ENCODE measurements at regions of chr4 and their contacts with region 1.

Region 1: GRCh38 chr4:159201168-159201567 is 98.3 kb downstream of the RAPGEF2 start:
- DNase-seq: no peak
- H3K4me3 ChIP-seq: no peak overlapping the region
- H3K4me3 Mint-ChIP-seq: no peak overlapping the region
- H3K27ac ChIP-seq: no peak overlapping the region
- H3K27ac Mint-ChIP-seq: no peak overlapping the region
- H3K4me1 ChIP-seq: peaks cover 9% of the 10 kb centered on the region
- H3K4me1 Mint-ChIP-seq: peaks cover 9 to 23% (median 16%) of the 10 kb centered on the region in 4 donors
- H3K27me3 ChIP-seq: no peaks in the 10 kb centered on the region
- H3K27me3 Mint-ChIP-seq: no peaks in the 10 kb centered on the region

Region 2: DNA sequence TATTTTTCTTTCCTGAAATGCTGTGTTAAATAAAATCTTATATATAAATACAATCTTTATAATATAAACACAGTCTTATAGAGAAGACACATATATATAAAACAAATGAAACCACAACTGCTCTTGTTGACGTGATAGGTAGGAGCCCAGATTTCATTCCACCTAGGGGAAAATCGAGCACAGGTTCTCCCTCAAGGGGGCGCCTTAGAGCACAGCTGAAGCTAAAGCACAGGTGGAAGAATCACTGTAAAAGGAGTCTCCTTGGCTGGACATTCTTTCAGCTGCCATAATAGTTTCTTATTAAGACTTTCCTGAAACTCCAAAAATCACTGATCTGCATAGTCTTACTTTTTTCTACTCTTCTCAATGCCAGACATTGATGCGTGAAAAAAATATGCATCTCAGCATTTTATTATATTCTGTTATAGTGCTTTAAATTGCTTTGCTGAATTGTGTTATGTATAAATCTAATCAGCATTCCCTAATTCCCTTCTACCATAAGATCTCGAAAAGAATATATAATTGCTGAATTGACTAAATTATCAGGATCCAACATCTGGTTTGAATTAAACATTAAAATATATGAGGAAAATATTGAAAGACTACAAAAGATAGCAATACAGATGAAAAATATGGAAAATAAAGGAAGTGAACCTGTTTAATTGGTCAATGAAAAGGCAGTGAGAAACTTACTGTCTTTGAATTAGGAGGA is 705.0 kb before region 1 on chr4:
- CTCF ChIA-PET with region 1: no interaction called
- POLR2A ChIA-PET with region 1: no interaction called
- intact Hi-C with region 1: loop called (anchors 5 kb)
- DNase-seq: no peak
- H3K4me3 ChIP-seq: no peak overlapping the region
- H3K4me3 Mint-ChIP-seq: no peak overlapping the region
- H3K27ac ChIP-seq: no peak overlapping the region
- H3K27ac Mint-ChIP-seq: no peak overlapping the region
- H3K4me1 ChIP-seq: no peaks in the 10 kb centered on the region
- H3K4me1 Mint-ChIP-seq: no peaks in the 10 kb centered on the region
- H3K27me3 ChIP-seq: no peaks in the 10 kb centered on the region
- H3K27me3 Mint-ChIP-seq: peaks cover 1 to 3% of the 10 kb centered on the region in 2 donors

Region 3: GRCh38 chr4:158856852-158857251 is 344.3 kb before region 1 on chr4:
- CTCF ChIA-PET with region 1: interaction called, 34 read pairs
- POLR2A ChIA-PET with region 1: no interaction called
- intact Hi-C with region 1: loop called (anchors 1 kb)
- DNase-seq: peak in 4 of 5 donors; percentile 22 to 28 (median 27)
- H3K4me3 ChIP-seq: no peak overlapping the region
- H3K4me3 Mint-ChIP-seq: no peak overlapping the region
- H3K27ac ChIP-seq: no peak overlapping the region
- H3K27ac Mint-ChIP-seq: no peak overlapping the region
- H3K4me1 ChIP-seq: no peaks in the 10 kb centered on the region
- H3K4me1 Mint-ChIP-seq: no peaks in the 10 kb centered on the region
- H3K27me3 ChIP-seq: no peaks in the 10 kb centered on the region
- H3K27me3 Mint-ChIP-seq: no peaks in the 10 kb centered on the region

Region 4: GRCh38 chr4:159185591-159186023 is 15.6 kb before region 1 on chr4:
- CTCF ChIA-PET with region 1: interaction called, 21 read pairs
- POLR2A ChIA-PET with region 1: no interaction called
- intact Hi-C with region 1: no loop called
- DNase-seq: no peak
- H3K4me3 ChIP-seq: no peak overlapping the region
- H3K4me3 Mint-ChIP-seq: no peak overlapping the region
- H3K27ac ChIP-seq: no peak overlapping the region
- H3K27ac Mint-ChIP-seq: no peak overlapping the region
- H3K4me1 ChIP-seq: no peaks in the 10 kb centered on the region
- H3K4me1 Mint-ChIP-seq: peaks cover 2 to 11% (median 6%) of the 10 kb centered on the region in 4 donors
- H3K27me3 ChIP-seq: no peaks in the 10 kb centered on the region
- H3K27me3 Mint-ChIP-seq: no peaks in the 10 kb centered on the region